Breast epithelium (tissue), 4 donors: ENCODE measurements at regions of chr18 and their contacts with region 1.

Region 1: DNA sequence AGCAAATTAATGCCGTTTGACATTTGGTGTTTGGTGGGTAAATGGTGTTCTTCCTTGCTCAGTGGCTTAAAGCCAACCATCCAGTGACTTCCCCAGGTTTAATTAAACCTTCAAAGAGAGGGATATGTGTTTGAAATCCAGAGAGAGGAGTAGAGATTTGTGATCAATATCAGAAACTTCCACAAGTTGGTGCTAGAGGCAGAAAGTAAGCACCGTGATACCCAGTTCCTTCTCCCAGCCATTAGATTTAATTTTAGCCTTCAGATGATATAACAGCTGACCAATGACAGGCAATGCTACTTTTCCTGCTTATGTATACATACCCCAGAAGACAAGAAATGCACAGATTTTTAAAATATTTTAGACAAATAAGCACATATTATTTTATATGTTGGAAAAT is 398.5 kb downstream of the CDH2 start:
- DNase-seq: no peak
- H3K4me3 ChIP-seq: no peak overlapping the region
- H3K27ac ChIP-seq: no peak overlapping the region
- H3K4me1 ChIP-seq: no peaks in the 10 kb centered on the region
- H3K27me3 ChIP-seq: no peaks in the 10 kb centered on the region
- CTCF ChIP-seq: no peak
- POLR2A ChIP-seq: no peak

Region 2: GRCh38 chr18:25915907-25916306 is 1862.5 kb before region 1 on chr18:
- intact Hi-C with region 1: loop called (anchors 10 kb)
- DNase-seq: no peak
- H3K4me3 ChIP-seq: no peak overlapping the region
- H3K27ac ChIP-seq: no peak overlapping the region
- H3K4me1 ChIP-seq: no peaks in the 10 kb centered on the region
- H3K27me3 ChIP-seq: no peaks in the 10 kb centered on the region
- CTCF ChIP-seq: no peak
- POLR2A ChIP-seq: no peak

Region 3: DNA sequence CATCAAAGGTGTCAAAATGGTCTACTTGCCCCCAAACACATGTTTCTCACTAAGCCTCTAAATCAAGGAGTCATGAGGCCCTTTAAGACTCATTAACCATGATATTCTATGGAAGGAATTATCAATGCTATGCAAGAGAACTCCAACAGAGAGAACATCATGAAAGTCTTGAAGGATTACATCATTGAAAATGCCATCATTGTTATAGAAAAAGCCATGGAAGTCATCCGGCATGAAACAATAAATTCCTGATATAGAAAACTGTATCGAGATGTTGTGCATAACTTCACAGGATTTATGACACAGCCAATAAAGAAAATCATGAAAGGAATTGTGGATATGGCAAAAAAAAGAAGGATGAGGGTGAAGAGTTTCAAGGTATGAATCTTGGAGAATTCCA is 1762.1 kb after region 1 on chr18:
- intact Hi-C with region 1: loop called (anchors 10 kb)
- DNase-seq: no peak
- H3K4me3 ChIP-seq: no peak overlapping the region
- H3K27ac ChIP-seq: no peak overlapping the region
- H3K4me1 ChIP-seq: no peaks in the 10 kb centered on the region
- H3K27me3 ChIP-seq: no peaks in the 10 kb centered on the region
- CTCF ChIP-seq: no peak
- POLR2A ChIP-seq: no peak